ENCODE measurements at regions of chr1 and their contacts with region 1.

Region 1: GRCh38 chr1:19861034-19861433 is 21.2 kb upstream of the OTUD3 start:
- DNase-seq: peak; percentile 61
- H3K4me3 ChIP-seq: no peak overlapping the region
- H3K27ac ChIP-seq: no peak overlapping the region
- H3K4me1 ChIP-seq: no peaks in the 10 kb centered on the region
- H3K27me3 ChIP-seq: no peaks in the 10 kb centered on the region
- CTCF ChIP-seq: no peak
- POLR2A ChIP-seq: no peak

Region 2: DNA sequence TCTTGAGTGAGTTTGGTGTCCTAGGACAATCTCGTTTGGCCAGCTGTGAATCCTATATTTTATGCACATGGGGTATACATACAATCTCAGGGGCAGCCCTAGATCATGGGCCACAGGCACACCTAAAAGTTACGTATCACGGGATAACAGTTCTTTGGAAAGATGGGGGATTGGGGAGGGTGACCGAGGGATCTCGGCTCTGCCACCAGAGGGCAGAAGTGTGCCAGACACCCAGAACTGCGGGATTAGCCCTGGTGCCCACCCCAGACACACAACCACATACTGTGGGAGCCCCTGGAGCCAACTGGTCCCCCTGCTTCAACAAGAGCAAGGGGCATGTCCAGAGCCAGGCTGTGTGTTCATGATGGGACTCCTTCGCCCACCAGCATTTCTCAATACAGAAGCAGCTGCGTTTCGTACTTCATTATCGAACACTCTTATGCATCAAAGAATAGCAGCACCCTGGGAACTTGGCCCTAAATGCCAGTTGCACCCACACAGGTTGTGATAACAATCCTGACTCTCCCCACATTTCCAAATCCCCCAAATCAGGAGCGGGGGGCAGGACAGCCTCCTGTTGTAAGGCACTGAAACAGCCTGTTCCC is 98.8 kb before region 1 on chr1:
- intact Hi-C with region 1: loop called (anchors 10 kb)
- DNase-seq: peak; percentile 27
- H3K4me3 ChIP-seq: no peak overlapping the region
- H3K27ac ChIP-seq: no peak overlapping the region
- H3K4me1 ChIP-seq: no peaks in the 10 kb centered on the region
- H3K27me3 ChIP-seq: no peaks in the 10 kb centered on the region
- CTCF ChIP-seq: peak in 3 of 4 experiments; percentile 75 to 84 (median 77)
- POLR2A ChIP-seq: no peak

Measured in prostate gland (tissue), 2 donors.